ENCODE measurements at regions of chr7 and their contacts with region 1.

Region 1: DNA sequence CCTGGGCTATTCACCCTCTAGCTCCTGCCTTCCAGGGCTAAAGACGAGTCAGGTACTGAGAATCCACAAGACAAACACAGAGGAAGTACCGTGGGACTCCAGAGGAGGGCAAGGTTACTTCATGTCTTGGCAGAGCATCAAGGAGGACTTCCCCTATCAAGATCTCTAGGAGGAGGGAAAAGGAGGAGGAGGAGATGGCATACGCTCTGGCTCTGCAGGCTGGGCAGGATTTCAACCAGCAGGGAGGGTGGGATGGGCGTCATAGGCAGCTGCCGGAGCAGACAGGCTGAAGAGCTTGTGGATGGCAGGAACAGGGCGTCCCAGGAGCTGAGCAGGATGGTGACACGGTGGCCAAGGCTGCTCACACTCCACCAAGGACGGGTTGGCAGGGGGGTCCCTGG is 21.3 kb downstream of the MDH2 start:
- DNase-seq: peak in 2 of 35 experiments; percentile 2 to 19
- ATAC-seq: peak in 1 of 4 experiments; percentile 47
- H3K4me3 ChIP-seq: no peak overlapping the region
- H3K4me3 Mint-ChIP-seq: no peak overlapping the region
- H3K27ac ChIP-seq: no peak overlapping the region
- H3K27ac Mint-ChIP-seq: no peak overlapping the region
- H3K4me1 ChIP-seq: no peaks in the 10 kb centered on the region
- H3K4me1 Mint-ChIP-seq: no peaks in the 10 kb centered on the region
- H3K27me3 ChIP-seq: no peaks in the 10 kb centered on the region
- H3K27me3 Mint-ChIP-seq: no peaks in the 10 kb centered on the region

Region 2: GRCh38 chr7:76133164-76133775 is 64.0 kb after region 1 on chr7:
- CTCF ChIA-PET with region 1: interaction called in 1 of 2 experiments, 12 read pairs
- POLR2A ChIA-PET with region 1: no interaction called
- DNase-seq: peak in 2 of 35 experiments; percentile 2 to 19
- ATAC-seq: peak; percentile 40 to 74 (median 62)
- H3K4me3 ChIP-seq: peak overlapping the region in 1 of 2 donors; percentile 3
- H3K4me3 Mint-ChIP-seq: peak overlapping the region; percentile 66 to 77 (median 74)
- H3K27ac ChIP-seq: no peak overlapping the region
- H3K27ac Mint-ChIP-seq: peak overlapping the region; percentile 93 to 98
- H3K4me1 ChIP-seq: peaks cover 9 to 10% of the 10 kb centered on the region in 2 experiments
- H3K4me1 Mint-ChIP-seq: peaks cover 19 to 45% (median 36%) of the 10 kb centered on the region in 3 donors
- H3K27me3 ChIP-seq: peaks cover 0 to 7% of the 10 kb centered on the region in 2 experiments
- H3K27me3 Mint-ChIP-seq: peaks cover 1 to 5% of the 10 kb centered on the region in 2 donors

Region 3: DNA sequence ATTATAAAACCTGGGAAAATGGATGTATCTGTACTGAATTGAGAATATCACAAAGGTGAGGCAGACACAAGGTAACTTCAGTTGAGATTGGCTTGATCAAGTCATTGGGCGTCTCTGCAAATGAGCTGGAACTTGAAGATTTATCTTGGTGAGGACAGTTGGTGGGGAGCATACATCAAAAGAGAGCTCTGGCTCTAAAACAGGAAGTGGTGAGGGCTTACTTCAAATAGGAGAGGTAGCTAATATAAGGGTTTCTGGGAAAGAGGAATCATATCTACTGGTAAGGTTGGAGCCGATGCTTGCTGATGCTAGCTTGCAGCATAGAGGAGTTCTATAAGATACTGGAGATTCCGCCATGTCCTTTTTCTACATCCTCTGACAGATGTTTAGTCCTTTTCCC is 1170.2 kb after region 1 on chr7:
- CTCF ChIA-PET with region 1: interaction called in 1 of 2 experiments, 10 read pairs
- POLR2A ChIA-PET with region 1: no interaction called
- DNase-seq: no peak
- ATAC-seq: peak in 2 of 4 experiments; percentile 32 to 45
- H3K4me3 ChIP-seq: no peak overlapping the region
- H3K4me3 Mint-ChIP-seq: no peak overlapping the region
- H3K27ac ChIP-seq: no peak overlapping the region
- H3K27ac Mint-ChIP-seq: peak overlapping the region in 1 of 2 donors; percentile 1
- H3K4me1 ChIP-seq: peaks cover 3 to 4% of the 10 kb centered on the region in 2 experiments
- H3K4me1 Mint-ChIP-seq: peaks cover 14 to 18% (median 16%) of the 10 kb centered on the region in 3 donors
- H3K27me3 ChIP-seq: no peaks in the 10 kb centered on the region
- H3K27me3 Mint-ChIP-seq: no peaks in the 10 kb centered on the region

Measured in T-cell (primary cell).